Psoas muscle (tissue), 8 donors: ENCODE measurements at regions of chr15 and their contacts with region 1.

Region 1: GRCh38 chr15:62569460-62570412 is 404.7 kb upstream of the C2CD4B start:
- DNase-seq: peak; percentile 65 to 88
- ATAC-seq: peak; percentile 68 to 89 (median 82)
- H3K4me3 ChIP-seq: no peak overlapping the region
- H3K27ac ChIP-seq: peak overlapping the region; percentile 77
- H3K4me1 ChIP-seq: peaks cover 42% of the 10 kb centered on the region
- H3K27me3 ChIP-seq: no peaks in the 10 kb centered on the region
- CTCF ChIP-seq: no peak

Region 2: GRCh38 chr15:62549345-62549970 is 20.3 kb before region 1 on chr15:
- intact Hi-C with region 1: no loop called
- DNase-seq: no peak
- ATAC-seq: no peak
- H3K4me3 ChIP-seq: no peak overlapping the region
- H3K27ac ChIP-seq: no peak overlapping the region
- H3K4me1 ChIP-seq: peaks cover 36% of the 10 kb centered on the region
- H3K27me3 ChIP-seq: no peaks in the 10 kb centered on the region
- CTCF ChIP-seq: peak; percentile 36

Region 3: DNA sequence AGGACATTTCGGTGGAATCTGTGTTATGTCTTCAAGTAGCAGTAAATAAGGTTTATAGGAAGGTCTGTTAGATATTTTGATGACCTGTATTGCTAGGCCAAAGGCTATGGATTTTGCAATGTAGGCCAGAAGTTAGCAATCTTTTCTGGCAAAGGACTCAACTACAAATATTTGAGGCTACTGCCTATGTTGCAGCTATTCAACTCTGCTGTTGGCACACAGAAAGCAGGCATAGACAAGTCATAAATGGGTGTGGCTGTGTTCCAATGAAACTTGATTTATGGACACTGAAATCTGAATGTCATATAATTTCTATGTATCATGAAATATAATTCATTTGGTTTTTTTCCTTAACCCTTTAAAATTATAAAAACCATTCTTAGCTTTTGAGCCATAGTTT is 34.0 kb after region 1 on chr15:
- intact Hi-C with region 1: loop called in 1 of 2 experiments (anchors 2 kb)
- DNase-seq: no peak
- ATAC-seq: peak in 3 of 4 donors; percentile 26 to 35 (median 30)
- H3K4me3 ChIP-seq: no peak overlapping the region
- H3K27ac ChIP-seq: no peak overlapping the region
- H3K4me1 ChIP-seq: peaks cover 25% of the 10 kb centered on the region
- H3K27me3 ChIP-seq: no peaks in the 10 kb centered on the region
- CTCF ChIP-seq: no peak

Region 4: DNA sequence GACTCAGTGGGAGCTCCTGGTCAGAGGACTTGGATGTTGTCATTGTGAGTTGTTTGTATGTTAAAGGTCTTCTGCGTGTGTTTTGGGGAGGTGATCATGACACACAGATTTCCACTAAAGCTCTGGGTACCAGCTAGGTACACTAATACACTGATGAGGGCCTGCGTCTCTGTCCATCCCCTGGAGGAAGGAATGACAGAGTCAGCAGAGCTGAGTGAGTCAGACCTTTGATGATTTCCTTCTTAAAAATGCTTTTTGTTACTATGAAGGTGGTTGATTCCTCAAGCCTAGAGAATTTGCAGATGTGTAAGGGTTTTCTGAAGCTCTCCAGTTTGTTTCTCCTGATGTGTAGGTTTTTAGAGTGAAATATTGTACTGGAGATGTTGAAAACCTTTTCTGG is 48.7 kb after region 1 on chr15:
- intact Hi-C with region 1: loop called in 1 of 2 experiments (anchors 5 kb)
- DNase-seq: no peak
- ATAC-seq: peak in 1 of 4 donors; percentile 32
- H3K4me3 ChIP-seq: no peak overlapping the region
- H3K27ac ChIP-seq: no peak overlapping the region
- H3K4me1 ChIP-seq: peaks cover 12% of the 10 kb centered on the region
- H3K27me3 ChIP-seq: no peaks in the 10 kb centered on the region
- CTCF ChIP-seq: no peak